Head of caudate nucleus (tissue), 42 donors: ENCODE measurements at regions of chr11 and their contacts with region 1.

Region 1: GRCh38 chr11:73597956-73598718 is at the start of gene FAM168A:
- DNase-seq: peak; percentile 90 to 98 (median 96)

Region 2: DNA sequence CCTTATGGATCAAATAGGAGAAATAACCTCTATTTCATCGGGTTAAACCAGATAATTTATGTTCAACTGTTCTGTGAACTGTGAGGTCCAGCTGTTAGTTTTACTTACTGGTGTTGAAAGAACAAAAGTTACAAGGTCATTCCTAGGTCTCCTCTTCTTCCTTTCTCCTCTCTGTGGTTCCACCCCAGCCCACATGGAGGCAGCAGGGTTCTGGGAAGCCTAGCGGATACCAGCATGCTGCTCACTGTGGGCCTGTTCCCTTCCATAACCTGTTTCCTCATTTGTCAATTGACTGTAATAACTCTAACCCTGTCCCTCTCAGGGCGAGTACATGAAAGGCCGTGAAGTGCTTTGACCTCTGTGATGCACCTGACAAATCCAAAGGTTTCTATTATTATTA is 194.1 kb before region 1 on chr11:
- intact Hi-C with region 1: loop called (anchors 10 kb)
- DNase-seq: peak; percentile 57 to 89 (median 76)

Region 3: GRCh38 chr11:73480677-73481076 is 117.5 kb before region 1 on chr11:
- intact Hi-C with region 1: loop called (anchors 10 kb)
- DNase-seq: no peak

Region 4: GRCh38 chr11:73538381-73538872 is 59.7 kb before region 1 on chr11:
- intact Hi-C with region 1: loop called (anchors 10 kb)
- DNase-seq: no peak

Region 5: GRCh38 chr11:73647459-73648100 is 49.4 kb after region 1 on chr11:
- intact Hi-C with region 1: loop called (anchors 5 kb)
- DNase-seq: peak; percentile 88 to 99 (median 97)

Region 6: DNA sequence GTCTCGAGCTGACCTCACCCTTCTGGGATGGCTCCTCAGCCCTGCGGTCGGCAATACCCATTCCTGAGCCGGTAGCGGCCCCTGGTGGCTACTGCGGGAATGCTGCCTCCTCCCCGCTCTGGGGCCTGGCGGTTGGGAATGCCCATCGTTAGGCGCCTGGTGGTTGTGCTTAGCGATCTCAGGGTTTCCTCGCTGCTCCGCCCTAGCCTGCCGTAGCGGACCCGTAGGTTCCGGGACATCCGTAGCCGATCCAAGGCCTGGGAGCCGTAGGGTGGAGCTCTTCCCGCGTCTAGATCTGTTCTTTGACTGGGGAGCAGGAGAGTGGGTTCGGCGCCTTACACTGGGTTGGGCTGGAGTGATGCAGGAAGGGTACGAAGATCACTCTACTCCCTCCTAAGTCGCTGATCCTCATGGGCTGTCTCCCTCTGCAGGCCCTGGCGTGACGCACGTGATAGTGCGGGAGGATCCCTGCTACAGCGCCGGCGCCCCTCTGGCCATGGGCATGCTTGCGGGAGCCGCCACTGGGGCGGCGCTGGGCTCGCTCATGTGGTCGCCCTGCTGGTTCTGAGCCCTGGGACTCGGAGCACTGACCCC is 63.0 kb after region 1 on chr11:
- intact Hi-C with region 1: no loop called
- DNase-seq: peak; percentile 80 to 98 (median 94)